Activated naive CD4-positive, alpha-beta T cell treated with anti-CD3 and anti-CD28 coated beads for 36 hours (primary cell): ENCODE measurements at regions of chr10 and their contacts with region 1.

Region 1: DNA sequence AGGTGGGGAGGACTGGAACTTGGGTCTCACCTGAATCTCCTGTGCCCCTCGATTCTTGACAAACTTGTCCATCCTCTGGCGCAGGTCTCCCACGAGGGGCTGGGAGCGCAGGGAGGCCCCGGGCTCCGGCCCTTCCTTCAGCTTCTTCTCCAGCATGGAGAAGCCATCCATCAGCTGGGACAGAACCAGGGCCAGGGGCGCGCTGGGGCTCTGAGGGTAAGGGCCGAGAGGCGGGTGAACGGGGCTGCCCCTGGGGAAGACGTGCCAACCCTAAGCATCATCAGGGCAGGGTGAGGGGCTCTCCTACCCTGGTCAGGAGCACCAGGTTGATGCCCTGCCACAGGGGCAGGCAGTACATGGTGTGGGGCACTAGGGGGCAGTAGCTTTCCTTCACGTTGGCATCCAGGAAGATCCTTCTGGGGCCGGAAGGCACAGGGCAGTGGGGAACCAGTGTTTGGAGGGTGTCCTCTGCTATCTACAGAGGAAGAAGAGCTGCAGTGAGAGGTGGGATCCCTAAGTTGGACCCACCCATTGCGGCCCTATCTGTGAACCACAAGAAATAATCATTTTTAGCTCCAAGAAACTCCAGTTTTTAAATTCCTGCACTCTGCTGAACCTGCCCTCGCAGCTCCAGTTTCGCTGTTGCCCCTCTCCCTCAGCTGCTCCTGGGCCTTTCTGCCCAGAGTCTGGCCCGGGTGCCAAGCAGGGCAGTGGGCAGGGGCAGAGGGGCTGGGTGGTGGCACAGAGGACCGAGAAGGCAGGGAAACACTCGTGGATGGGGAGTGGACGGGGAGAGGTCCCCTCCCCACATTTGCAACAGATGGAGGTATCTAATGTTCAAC is 10.8 kb upstream of the PYROXD2 start:
- DNase-seq: peak; percentile 63
- H3K4me3 Mint-ChIP-seq: no peak overlapping the region
- H3K27ac Mint-ChIP-seq: no peak overlapping the region
- H3K4me1 Mint-ChIP-seq: no peaks in the 10 kb centered on the region
- H3K27me3 Mint-ChIP-seq: no peaks in the 10 kb centered on the region

Region 2: GRCh38 chr10:98414932-98415730 is 10.6 kb before region 1 on chr10 and contains the start of gene PYROXD2:
- CTCF ChIA-PET with region 1: interaction called, 17 read pairs
- intact Hi-C with region 1: no loop called
- DNase-seq: peak; percentile 72
- H3K4me3 Mint-ChIP-seq: peak within 1 kb of the TSS; percentile 89
- H3K27ac Mint-ChIP-seq: peak within 1 kb of the TSS; percentile 92
- H3K4me1 Mint-ChIP-seq: peaks cover 16% of the 10 kb centered on the region
- H3K27me3 Mint-ChIP-seq: no peaks in the 10 kb centered on the region
- total RNA-seq, gene PYROXD2: 4.2 to 5.0 TPM

Region 3: GRCh38 chr10:98436704-98437103 is 11.0 kb after region 1 on chr10:
- CTCF ChIA-PET with region 1: interaction called, 22 read pairs
- intact Hi-C with region 1: no loop called
- DNase-seq: no peak
- H3K4me3 Mint-ChIP-seq: no peak overlapping the region
- H3K27ac Mint-ChIP-seq: no peak overlapping the region
- H3K4me1 Mint-ChIP-seq: peaks cover 18% of the 10 kb centered on the region
- H3K27me3 Mint-ChIP-seq: no peaks in the 10 kb centered on the region

Region 4: DNA sequence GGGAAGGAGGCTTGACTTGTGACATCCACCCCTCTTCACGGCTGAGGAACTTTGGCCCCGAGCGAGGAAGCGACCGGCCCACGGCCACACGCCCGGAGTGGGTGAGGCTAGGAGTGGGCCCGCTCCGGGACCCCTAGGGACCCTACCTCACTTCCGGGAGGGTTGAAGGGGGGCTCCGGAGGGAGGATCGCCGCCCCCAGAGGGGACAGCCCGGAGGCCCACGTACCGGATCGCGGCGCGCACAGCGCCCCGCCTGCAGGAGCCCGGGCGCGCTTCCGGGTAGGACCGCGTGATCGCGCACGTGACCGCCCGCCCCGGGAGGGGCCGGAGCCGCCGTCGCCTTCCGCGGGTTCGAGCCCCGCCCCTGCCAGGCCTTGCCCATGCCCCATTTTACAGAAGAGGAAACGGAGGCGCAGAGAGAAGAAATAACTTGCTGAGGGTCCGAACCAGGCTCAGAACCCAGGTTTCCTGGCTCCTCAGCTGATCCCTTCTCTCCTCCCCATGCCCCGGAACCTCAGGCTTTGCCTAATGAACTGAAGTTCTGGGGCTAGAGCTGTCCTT is 21.0 kb after region 1 on chr10 and contains the start of gene HPS1:
- CTCF ChIA-PET with region 1: interaction called, 15 read pairs
- intact Hi-C with region 1: no loop called
- DNase-seq: peak; percentile 86
- H3K4me3 Mint-ChIP-seq: peak within 1 kb of the TSS; percentile 88
- H3K27ac Mint-ChIP-seq: peak within 1 kb of the TSS; percentile 84
- H3K4me1 Mint-ChIP-seq: peaks cover 40% of the 10 kb centered on the region
- H3K27me3 Mint-ChIP-seq: peaks cover 3% of the 10 kb centered on the region
- total RNA-seq, gene HPS1: 28.1 to 31.0 TPM

Region 5: DNA sequence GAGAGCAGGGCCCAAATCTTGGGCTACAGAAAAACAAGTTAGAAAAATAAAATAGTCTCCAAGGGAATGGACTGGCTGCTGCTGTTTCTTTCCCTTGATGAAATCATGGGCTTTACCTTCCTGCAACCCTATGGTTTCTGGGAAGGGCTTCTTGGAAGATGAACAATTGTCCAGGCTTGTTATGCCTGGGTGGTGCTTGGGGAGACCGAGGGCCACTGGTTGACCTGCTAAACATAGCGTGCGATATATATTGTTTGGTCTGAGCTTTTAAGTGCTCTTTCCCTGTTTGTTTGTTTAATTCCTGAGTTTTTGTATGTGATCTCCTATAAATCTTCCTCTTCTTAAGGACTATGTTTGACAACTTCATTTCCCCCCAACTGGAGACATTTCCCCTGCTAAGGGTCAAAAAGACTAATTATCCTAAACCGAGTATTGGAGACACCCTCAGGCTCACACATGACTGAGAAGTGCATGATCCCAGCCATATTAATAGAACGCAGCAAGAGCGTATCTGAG is 1156.6 kb after region 1 on chr10:
- CTCF ChIA-PET with region 1: no interaction called
- intact Hi-C with region 1: no loop called
- DNase-seq: no peak
- H3K4me3 Mint-ChIP-seq: no peak overlapping the region
- H3K27ac Mint-ChIP-seq: no peak overlapping the region
- H3K4me1 Mint-ChIP-seq: no peaks in the 10 kb centered on the region
- H3K27me3 Mint-ChIP-seq: peaks cover 2% of the 10 kb centered on the region